ENCODE measurements at regions of chr1 and their contacts with region 1.

Region 1: GRCh38 chr1:108559215-108560186 is at the start of gene EEIG2:
- DNase-seq: peak; percentile 82 to 91 (median 89)
- H3K4me3 ChIP-seq: peak within 1 kb of the TSS; percentile 61
- H3K4me3 Mint-ChIP-seq: peak within 1 kb of the TSS; percentile 91 to 98 (median 95)
- H3K27ac ChIP-seq: peak within 1 kb of the TSS; percentile 44
- H3K27ac Mint-ChIP-seq: peak within 1 kb of the TSS; percentile 81 to 99 (median 94)
- H3K4me1 ChIP-seq: peaks cover 28% of the 10 kb centered on the region
- H3K4me1 Mint-ChIP-seq: peaks cover 34 to 45% (median 40%) of the 10 kb centered on the region in 3 donors
- H3K27me3 ChIP-seq: no peaks in the 10 kb centered on the region
- H3K27me3 Mint-ChIP-seq: no peaks in the 10 kb centered on the region
- total RNA-seq, gene EEIG2: 19.4 to 21.0 TPM

Region 2: DNA sequence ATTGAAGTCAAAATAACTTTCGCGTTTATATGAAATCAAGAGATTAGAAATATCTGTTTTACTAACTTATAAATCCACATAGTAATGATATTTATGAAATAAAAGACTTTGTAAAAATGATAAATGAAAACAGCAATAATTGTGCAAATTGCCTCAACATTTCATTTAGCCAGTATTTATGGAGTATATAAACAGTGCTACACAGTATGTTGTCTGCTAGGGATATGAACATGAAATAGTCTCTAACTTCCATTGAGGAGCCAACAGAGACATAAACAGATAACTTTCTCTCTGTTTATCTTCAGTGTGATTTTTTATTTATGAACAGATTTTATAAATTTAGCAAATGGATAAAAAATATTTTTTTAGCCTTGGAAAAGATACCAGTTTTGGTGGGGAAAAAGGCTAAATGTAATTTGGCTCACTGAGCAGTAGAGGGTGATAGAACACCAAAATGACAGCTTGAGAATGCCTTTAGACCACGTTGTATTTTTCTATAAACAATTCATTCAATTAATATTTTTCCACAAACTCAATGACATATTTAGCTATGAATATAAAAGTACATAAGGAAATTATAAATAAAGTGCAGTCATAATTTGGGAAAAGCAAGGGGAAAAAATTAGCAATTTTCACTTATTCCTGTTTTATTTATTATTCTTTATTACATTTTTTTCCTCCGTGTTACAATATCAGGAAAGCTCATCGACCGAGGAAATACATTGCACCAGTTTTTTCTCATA is 47.1 kb before region 1 on chr1:
- CTCF ChIA-PET with region 1: interaction called, 78 read pairs
- POLR2A ChIA-PET with region 1: interaction called, 3 read pairs
- DNase-seq: peak in 2 of 5 donors; percentile 37 to 48
- H3K4me3 ChIP-seq: no peak overlapping the region
- H3K4me3 Mint-ChIP-seq: no peak overlapping the region
- H3K27ac ChIP-seq: no peak overlapping the region
- H3K27ac Mint-ChIP-seq: no peak overlapping the region
- H3K4me1 ChIP-seq: no peaks in the 10 kb centered on the region
- H3K4me1 Mint-ChIP-seq: no peaks in the 10 kb centered on the region
- H3K27me3 ChIP-seq: no peaks in the 10 kb centered on the region
- H3K27me3 Mint-ChIP-seq: peaks cover 2 to 7% of the 10 kb centered on the region in 2 donors

Region 3: GRCh38 chr1:108521990-108522393 is 37.5 kb before region 1 on chr1:
- CTCF ChIA-PET with region 1: interaction called, 11 read pairs
- POLR2A ChIA-PET with region 1: no interaction called
- DNase-seq: no peak
- H3K4me3 ChIP-seq: no peak overlapping the region
- H3K4me3 Mint-ChIP-seq: no peak overlapping the region
- H3K27ac ChIP-seq: no peak overlapping the region
- H3K27ac Mint-ChIP-seq: no peak overlapping the region
- H3K4me1 ChIP-seq: no peaks in the 10 kb centered on the region
- H3K4me1 Mint-ChIP-seq: no peaks in the 10 kb centered on the region
- H3K27me3 ChIP-seq: no peaks in the 10 kb centered on the region
- H3K27me3 Mint-ChIP-seq: peaks cover 12 to 37% of the 10 kb centered on the region in 2 donors

Region 4: GRCh38 chr1:108541861-108542260 is 17.6 kb before region 1 on chr1:
- CTCF ChIA-PET with region 1: interaction called, 13 read pairs
- POLR2A ChIA-PET with region 1: no interaction called
- DNase-seq: no peak
- H3K4me3 ChIP-seq: no peak overlapping the region
- H3K4me3 Mint-ChIP-seq: no peak overlapping the region
- H3K27ac ChIP-seq: no peak overlapping the region
- H3K27ac Mint-ChIP-seq: peak overlapping the region in 1 of 8 donors; percentile 42
- H3K4me1 ChIP-seq: no peaks in the 10 kb centered on the region
- H3K4me1 Mint-ChIP-seq: peaks cover 0 to 6% (median 0%) of the 10 kb centered on the region in 3 donors
- H3K27me3 ChIP-seq: no peaks in the 10 kb centered on the region
- H3K27me3 Mint-ChIP-seq: peaks cover 17 to 48% of the 10 kb centered on the region in 2 donors

Region 5: DNA sequence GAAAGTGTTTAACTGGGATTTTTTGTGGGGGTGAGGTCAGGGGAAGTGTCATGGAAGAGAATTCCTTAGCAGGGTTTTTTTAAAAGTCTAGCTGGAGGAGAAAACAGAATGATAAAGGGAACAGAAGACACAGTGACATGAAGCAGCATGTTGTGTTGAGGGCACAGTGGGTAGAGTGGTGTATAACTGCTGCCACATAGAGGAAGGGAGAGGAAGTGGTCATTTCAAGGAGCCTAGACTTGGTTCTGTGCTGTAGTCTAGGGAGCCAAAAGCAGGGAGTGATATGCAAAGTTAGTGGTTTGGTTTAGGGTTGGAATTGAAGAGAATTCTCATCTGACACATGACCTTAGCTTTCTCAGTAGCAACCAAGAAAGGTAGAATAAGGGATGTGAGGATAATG is 10.6 kb after region 1 on chr1:
- CTCF ChIA-PET with region 1: interaction called, 15 read pairs
- POLR2A ChIA-PET with region 1: interaction called, 3 read pairs
- DNase-seq: peak in 2 of 5 donors; percentile 21 to 26
- H3K4me3 ChIP-seq: no peak overlapping the region
- H3K4me3 Mint-ChIP-seq: no peak overlapping the region
- H3K27ac ChIP-seq: no peak overlapping the region
- H3K27ac Mint-ChIP-seq: no peak overlapping the region
- H3K4me1 ChIP-seq: no peaks in the 10 kb centered on the region
- H3K4me1 Mint-ChIP-seq: peaks cover 3 to 14% (median 4%) of the 10 kb centered on the region in 3 donors
- H3K27me3 ChIP-seq: no peaks in the 10 kb centered on the region
- H3K27me3 Mint-ChIP-seq: no peaks in the 10 kb centered on the region

Region 6: DNA sequence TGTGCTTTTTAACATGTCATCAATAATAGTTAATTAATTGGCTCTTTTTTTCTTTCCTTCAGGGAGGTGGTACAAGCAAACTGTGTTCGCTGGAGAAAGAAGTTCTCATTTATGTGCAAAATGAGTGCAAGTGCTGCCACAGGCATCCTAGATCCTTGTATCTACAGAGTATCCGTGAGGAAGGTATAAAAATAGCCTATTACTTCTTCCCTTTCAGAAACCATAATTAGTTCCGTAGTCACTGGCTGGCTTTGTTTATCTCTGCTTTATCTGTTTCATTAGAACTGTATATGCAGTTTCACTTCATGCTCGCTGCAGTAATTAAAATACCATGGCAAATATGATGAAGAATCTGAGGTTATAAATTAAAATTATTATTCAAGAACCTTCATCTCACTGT is 41.0 kb after region 1 on chr1:
- CTCF ChIA-PET with region 1: no interaction called
- POLR2A ChIA-PET with region 1: no interaction called
- DNase-seq: no peak
- H3K4me3 ChIP-seq: no peak overlapping the region
- H3K4me3 Mint-ChIP-seq: no peak overlapping the region
- H3K27ac ChIP-seq: no peak overlapping the region
- H3K27ac Mint-ChIP-seq: no peak overlapping the region
- H3K4me1 ChIP-seq: no peaks in the 10 kb centered on the region
- H3K4me1 Mint-ChIP-seq: peaks cover 0 to 11% (median 4%) of the 10 kb centered on the region in 3 donors
- H3K27me3 ChIP-seq: no peaks in the 10 kb centered on the region
- H3K27me3 Mint-ChIP-seq: no peaks in the 10 kb centered on the region

Region 7: DNA sequence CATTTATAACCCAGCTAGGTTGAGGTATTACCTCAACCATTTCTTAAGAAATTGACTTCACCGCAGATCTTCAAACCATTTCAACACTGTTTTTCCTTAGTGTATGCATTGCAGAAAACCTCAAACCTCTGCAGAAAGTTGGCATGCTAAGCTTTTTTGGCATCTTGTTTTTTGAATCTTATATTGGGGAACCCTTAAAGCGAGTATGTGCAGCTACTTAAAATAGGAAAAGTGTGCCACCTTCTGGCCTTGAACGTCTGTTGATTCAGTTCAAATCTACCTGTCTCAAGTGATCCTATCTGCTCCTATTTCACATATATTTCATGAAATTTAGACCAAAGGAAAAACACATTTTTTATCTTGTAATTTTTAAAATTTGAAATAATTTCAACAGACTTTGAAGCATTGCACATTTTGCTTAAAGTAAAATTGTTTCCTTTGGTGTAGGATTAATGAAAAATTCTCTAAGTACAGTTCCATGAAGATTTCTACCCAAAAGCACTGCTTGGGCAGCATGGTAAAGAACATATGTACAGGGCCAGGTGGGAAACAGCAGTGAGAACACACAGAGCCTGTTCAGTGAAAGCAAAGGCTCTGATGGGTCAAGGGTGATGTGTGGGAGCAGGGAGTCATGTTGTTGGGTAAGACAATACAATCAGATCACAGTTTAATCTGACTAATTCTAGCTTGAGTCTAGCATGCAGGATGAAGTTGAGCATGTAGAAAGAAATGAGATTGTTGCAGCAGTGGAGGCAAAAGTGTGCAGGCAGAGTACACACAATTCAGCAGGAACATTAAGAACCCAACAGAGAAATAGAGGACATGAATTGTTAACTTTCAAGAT is 84.2 kb after region 1 on chr1:
- CTCF ChIA-PET with region 1: interaction called, 90 read pairs
- POLR2A ChIA-PET with region 1: interaction called, 37 read pairs
- DNase-seq: peak; percentile 21 to 69 (median 59)
- H3K4me3 ChIP-seq: no peak overlapping the region
- H3K4me3 Mint-ChIP-seq: peak overlapping the region in 6 of 7 donors; percentile 2 to 92 (median 44)
- H3K27ac ChIP-seq: no peak overlapping the region
- H3K27ac Mint-ChIP-seq: peak overlapping the region; percentile 95 to 100 (median 98)
- H3K4me1 ChIP-seq: peaks cover 67% of the 10 kb centered on the region
- H3K4me1 Mint-ChIP-seq: peaks cover 73 to 83% (median 82%) of the 10 kb centered on the region in 3 donors
- H3K27me3 ChIP-seq: no peaks in the 10 kb centered on the region
- H3K27me3 Mint-ChIP-seq: no peaks in the 10 kb centered on the region

Region 8: DNA sequence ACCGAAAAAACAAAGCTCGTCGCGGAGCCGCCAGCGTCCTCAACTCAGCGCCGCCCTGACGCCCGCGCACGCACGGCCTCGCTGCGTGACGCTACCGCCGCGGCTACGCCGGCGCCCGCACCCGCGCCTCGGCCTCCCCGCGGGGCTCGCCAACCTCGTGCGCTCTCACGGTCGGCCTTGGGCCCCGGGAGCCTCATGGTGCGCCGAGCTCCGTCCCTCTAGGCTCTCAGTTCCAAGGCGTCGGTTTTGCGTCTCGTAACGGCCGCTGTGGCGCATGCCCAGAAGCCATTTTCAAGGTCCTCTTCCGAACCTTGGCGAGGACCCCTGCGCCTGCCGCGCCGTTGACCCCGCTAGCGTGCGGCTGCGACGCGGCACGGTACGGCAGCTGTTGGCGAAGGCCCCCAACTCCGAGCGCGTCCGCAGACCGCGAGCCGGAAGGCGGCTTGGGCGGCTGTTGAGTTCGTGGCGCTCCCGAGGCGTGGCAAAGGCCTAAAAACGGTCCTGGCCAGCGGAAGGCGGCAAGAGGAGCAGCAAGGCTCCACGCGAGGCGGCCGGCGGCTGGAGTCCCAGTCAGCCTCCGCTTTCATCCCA is 101.6 kb after region 1 on chr1 and contains the start of gene HENMT1:
- CTCF ChIA-PET with region 1: interaction called, 13 read pairs
- POLR2A ChIA-PET with region 1: interaction called, 21 read pairs
- DNase-seq: peak; percentile 65 to 92 (median 88)
- H3K4me3 ChIP-seq: peak within 1 kb of the TSS; percentile 82
- H3K4me3 Mint-ChIP-seq: peak within 1 kb of the TSS; percentile 87 to 95 (median 88)
- H3K27ac ChIP-seq: peak within 1 kb of the TSS; percentile 94
- H3K27ac Mint-ChIP-seq: peak within 1 kb of the TSS; percentile 95 to 100 (median 98)
- H3K4me1 ChIP-seq: peaks cover 16% of the 10 kb centered on the region
- H3K4me1 Mint-ChIP-seq: peaks cover 35 to 63% (median 53%) of the 10 kb centered on the region in 3 donors
- H3K27me3 ChIP-seq: no peaks in the 10 kb centered on the region
- H3K27me3 Mint-ChIP-seq: no peaks in the 10 kb centered on the region
- total RNA-seq, gene HENMT1: 29.6 to 31.3 TPM

Region 9: GRCh38 chr1:108780937-108781574 is 221.6 kb after region 1 on chr1:
- CTCF ChIA-PET with region 1: no interaction called
- POLR2A ChIA-PET with region 1: no interaction called
- DNase-seq: no peak
- H3K4me3 ChIP-seq: no peak overlapping the region
- H3K4me3 Mint-ChIP-seq: no peak overlapping the region
- H3K27ac ChIP-seq: no peak overlapping the region
- H3K27ac Mint-ChIP-seq: peak overlapping the region in 2 of 8 donors; percentile 40 to 53
- H3K4me1 ChIP-seq: no peaks in the 10 kb centered on the region
- H3K4me1 Mint-ChIP-seq: peaks cover 0 to 2% (median 0%) of the 10 kb centered on the region in 3 donors
- H3K27me3 ChIP-seq: no peaks in the 10 kb centered on the region
- H3K27me3 Mint-ChIP-seq: no peaks in the 10 kb centered on the region

Region 10: DNA sequence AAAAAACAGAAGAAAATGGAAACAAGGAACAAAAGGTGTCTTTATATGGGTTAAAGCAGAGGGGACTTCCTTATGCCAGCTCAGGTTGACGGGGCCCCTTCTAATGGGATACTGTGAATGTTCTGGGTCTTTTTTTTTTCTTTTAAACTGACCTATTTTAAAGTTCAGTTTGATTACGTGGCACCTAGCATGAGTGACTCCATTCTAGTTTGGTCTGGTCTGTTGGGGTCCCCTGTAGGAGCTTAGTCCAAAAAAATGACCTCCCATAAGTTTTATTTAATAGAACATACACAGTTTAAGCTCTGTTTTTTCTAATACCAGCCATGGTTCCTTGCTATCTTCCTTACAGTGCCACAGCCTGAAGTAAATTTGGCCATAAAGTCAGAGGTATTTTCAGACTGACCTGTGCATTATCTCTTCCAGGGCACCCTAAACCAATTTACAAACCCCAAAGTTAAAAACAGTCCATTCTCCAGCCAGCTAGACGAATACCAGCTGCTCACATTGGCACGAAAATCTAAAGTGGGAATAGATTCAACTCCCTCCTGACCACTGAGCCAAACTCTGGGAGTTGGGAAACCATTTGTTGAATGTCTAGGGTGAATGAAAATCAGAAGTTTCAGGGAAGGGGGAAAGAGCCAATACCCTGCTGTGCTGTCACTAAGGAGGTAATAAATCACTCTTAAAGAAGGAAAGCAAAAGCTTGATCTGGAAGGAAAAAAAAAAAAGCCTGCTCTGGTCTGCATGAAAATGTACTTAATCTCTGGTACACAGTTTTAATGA is 255.0 kb after region 1 on chr1:
- CTCF ChIA-PET with region 1: no interaction called
- POLR2A ChIA-PET with region 1: no interaction called
- DNase-seq: no peak
- H3K4me3 ChIP-seq: no peak overlapping the region
- H3K4me3 Mint-ChIP-seq: no peak overlapping the region
- H3K27ac ChIP-seq: no peak overlapping the region
- H3K27ac Mint-ChIP-seq: no peak overlapping the region
- H3K4me1 ChIP-seq: no peaks in the 10 kb centered on the region
- H3K4me1 Mint-ChIP-seq: no peaks in the 10 kb centered on the region
- H3K27me3 ChIP-seq: no peaks in the 10 kb centered on the region
- H3K27me3 Mint-ChIP-seq: peaks cover 1 to 11% of the 10 kb centered on the region in 2 donors

Region 11: GRCh38 chr1:108830119-108831008 is 270.9 kb after region 1 on chr1:
- CTCF ChIA-PET with region 1: no interaction called
- POLR2A ChIA-PET with region 1: no interaction called
- DNase-seq: no peak
- H3K4me3 ChIP-seq: no peak overlapping the region
- H3K4me3 Mint-ChIP-seq: no peak overlapping the region
- H3K27ac ChIP-seq: no peak overlapping the region
- H3K27ac Mint-ChIP-seq: no peak overlapping the region
- H3K4me1 ChIP-seq: no peaks in the 10 kb centered on the region
- H3K4me1 Mint-ChIP-seq: peaks cover 0 to 5% (median 4%) of the 10 kb centered on the region in 3 donors
- H3K27me3 ChIP-seq: no peaks in the 10 kb centered on the region
- H3K27me3 Mint-ChIP-seq: peaks cover 0 to 6% of the 10 kb centered on the region in 2 donors

Measured in CD8-positive, alpha-beta memory T cell (primary cell).